Activated T-helper 1 cell treated with anti-CD3 and anti-CD28 coated beads, Interleukin-12 subunit alpha, Interleukin-12 subunit beta, Interleukin-2, Interleukin-4 antibody, amounts not matched to agents 30 ng/mL and 10 ng/mL and 1 ng/mL, durations not matched to agents 14 hours and 24 hours and 36 hours (primary cell): ENCODE measurements at regions of chr17 and their contacts with region 1.

Region 1: GRCh38 chr17:66301797-66302741 is at the start of gene PRKCA:
- DNase-seq: peak; percentile 77
- H3K4me3 Mint-ChIP-seq: peak within 1 kb of the TSS; percentile 100
- H3K27ac Mint-ChIP-seq: peak within 1 kb of the TSS; percentile 99
- H3K4me1 Mint-ChIP-seq: peaks cover 48% of the 10 kb centered on the region
- H3K27me3 Mint-ChIP-seq: peaks cover 9% of the 10 kb centered on the region
- total RNA-seq, gene PRKCA: 155 and 157 TPM in 2 replicates

Region 2: GRCh38 chr17:65055348-65056261 is 1246.5 kb before region 1 on chr17:
- intact Hi-C with region 1: loop called (anchors 5 kb)
- DNase-seq: peak; percentile 53
- H3K4me3 Mint-ChIP-seq: peak overlapping the region; percentile 94
- H3K27ac Mint-ChIP-seq: peak overlapping the region; percentile 93
- H3K4me1 Mint-ChIP-seq: peaks cover 32% of the 10 kb centered on the region
- H3K27me3 Mint-ChIP-seq: peaks cover 5% of the 10 kb centered on the region

Region 3: DNA sequence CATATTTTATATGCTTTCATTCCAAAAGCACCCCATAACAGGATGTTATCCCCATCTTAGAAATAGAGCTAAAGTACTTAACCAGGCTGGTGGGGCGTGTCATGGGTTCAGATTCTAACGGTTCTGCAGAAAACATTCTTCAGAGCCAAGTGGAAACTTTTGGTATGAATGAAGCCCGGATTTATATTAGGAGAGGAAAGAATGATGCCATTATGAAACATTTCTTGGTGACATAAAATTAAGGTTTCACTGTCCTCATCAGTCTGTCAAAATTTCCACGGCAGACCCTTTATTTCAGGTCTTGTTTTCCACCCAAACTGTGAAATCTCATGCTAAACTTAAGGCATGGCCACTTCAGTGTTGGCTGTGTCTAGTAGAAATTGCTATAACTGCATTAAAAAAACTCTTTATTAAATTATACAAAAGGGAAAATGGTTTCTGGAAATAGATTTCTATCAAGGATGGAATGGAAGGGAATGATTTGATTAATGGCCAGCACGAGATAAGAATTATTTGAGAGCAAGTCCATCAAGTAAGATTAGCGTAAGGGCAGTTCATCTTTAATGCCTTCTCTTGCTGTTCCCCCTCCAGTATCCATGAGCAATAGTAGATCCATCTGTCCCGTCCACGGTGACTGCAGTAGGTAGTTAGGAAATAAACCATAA is 12.1 kb after region 1 on chr17:
- intact Hi-C with region 1: loop called (anchors 1 kb)
- DNase-seq: no peak
- H3K4me3 Mint-ChIP-seq: no peak overlapping the region
- H3K27ac Mint-ChIP-seq: peak overlapping the region; percentile 80
- H3K4me1 Mint-ChIP-seq: peaks cover 77% of the 10 kb centered on the region
- H3K27me3 Mint-ChIP-seq: no peaks in the 10 kb centered on the region

Region 4: DNA sequence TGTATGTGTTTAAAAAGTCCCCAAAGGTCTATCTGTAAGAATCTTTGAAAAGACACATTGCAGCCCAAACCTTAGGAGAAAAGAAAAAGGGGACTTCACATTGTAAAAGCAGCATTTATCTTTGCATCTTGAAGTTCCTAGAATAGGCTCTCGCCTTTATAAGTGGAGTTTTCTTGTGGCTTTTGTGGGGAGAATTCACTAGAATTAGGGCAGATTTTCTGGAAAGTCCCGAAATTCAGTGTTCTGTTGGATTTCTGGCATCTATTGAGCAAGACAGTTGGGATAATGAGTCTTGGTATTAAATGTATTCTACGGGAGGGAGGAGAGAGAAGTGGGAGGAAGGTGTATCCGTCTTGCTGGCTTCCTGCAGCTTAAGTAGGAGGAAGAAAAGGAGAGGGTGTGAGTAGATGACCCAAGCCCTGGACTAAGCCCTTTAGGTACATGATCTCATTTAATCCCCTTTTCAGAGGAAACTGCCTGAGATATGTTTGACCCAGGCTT is 63.0 kb after region 1 on chr17:
- intact Hi-C with region 1: loop called (anchors 2 kb)
- DNase-seq: no peak
- H3K4me3 Mint-ChIP-seq: peak overlapping the region; percentile 53
- H3K27ac Mint-ChIP-seq: peak overlapping the region; percentile 91
- H3K4me1 Mint-ChIP-seq: peaks cover 83% of the 10 kb centered on the region
- H3K27me3 Mint-ChIP-seq: no peaks in the 10 kb centered on the region

Region 5: DNA sequence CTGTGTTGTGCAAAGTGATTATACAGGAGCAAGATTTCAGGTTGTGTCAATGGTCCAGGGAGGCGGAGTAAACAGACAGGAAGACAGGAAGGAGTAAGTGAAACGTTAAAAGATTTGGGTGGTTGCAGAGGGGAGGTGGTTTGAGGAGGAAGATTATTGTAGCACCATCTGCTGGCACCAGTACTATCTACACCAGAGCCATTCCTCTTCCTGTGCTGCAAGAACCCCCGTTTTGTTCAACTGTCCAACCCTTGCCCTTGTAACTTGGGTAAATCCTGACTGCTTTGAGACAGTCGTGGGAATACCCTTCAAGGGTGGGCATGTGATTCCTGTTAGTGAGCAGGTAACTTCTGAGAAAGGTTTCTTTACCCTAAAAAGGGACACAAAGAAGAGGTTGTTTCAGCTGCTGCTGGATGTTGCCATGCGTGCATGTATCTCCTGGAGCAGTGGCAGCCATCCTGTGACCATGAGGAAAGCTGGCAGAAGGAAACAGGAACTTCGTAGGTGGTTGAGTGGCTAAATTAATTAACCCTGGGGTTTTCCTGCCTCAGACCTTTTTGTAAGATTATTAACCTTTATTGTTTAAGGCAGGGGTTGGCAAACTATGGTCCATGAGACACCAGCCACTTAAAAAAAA is 124.4 kb after region 1 on chr17:
- intact Hi-C with region 1: loop called (anchors 1 kb)
- DNase-seq: peak; percentile 48
- H3K4me3 Mint-ChIP-seq: peak overlapping the region; percentile 23
- H3K27ac Mint-ChIP-seq: peak overlapping the region; percentile 66
- H3K4me1 Mint-ChIP-seq: peaks cover 65% of the 10 kb centered on the region
- H3K27me3 Mint-ChIP-seq: no peaks in the 10 kb centered on the region

Region 6: DNA sequence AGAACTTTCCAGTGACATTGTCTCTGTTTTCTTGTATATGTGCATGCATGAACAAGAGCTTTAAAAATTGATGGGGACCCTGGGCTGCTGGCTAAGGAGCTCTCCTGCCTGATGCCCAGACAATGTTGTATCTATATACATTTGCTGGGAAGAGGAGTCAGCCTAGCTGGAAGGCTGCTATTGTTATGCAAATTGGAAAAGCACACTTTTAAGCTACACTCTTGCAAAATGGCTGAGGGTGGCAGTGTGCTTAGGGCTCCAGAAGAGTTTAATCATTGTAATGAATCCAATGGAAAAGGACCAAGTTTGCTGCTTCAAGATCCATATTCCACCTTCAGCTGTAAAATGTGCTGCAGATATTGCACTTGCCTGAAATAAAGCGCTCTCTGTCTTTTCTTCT is 172.2 kb after region 1 on chr17:
- intact Hi-C with region 1: no loop called
- DNase-seq: no peak
- H3K4me3 Mint-ChIP-seq: no peak overlapping the region
- H3K27ac Mint-ChIP-seq: no peak overlapping the region
- H3K4me1 Mint-ChIP-seq: peaks cover 40% of the 10 kb centered on the region
- H3K27me3 Mint-ChIP-seq: no peaks in the 10 kb centered on the region

Region 7: GRCh38 chr17:66549731-66550207 is 247.7 kb after region 1 on chr17:
- intact Hi-C with region 1: loop called (anchors 1 kb)
- DNase-seq: no peak
- H3K4me3 Mint-ChIP-seq: no peak overlapping the region
- H3K27ac Mint-ChIP-seq: no peak overlapping the region
- H3K4me1 Mint-ChIP-seq: peaks cover 42% of the 10 kb centered on the region
- H3K27me3 Mint-ChIP-seq: no peaks in the 10 kb centered on the region

Region 8: DNA sequence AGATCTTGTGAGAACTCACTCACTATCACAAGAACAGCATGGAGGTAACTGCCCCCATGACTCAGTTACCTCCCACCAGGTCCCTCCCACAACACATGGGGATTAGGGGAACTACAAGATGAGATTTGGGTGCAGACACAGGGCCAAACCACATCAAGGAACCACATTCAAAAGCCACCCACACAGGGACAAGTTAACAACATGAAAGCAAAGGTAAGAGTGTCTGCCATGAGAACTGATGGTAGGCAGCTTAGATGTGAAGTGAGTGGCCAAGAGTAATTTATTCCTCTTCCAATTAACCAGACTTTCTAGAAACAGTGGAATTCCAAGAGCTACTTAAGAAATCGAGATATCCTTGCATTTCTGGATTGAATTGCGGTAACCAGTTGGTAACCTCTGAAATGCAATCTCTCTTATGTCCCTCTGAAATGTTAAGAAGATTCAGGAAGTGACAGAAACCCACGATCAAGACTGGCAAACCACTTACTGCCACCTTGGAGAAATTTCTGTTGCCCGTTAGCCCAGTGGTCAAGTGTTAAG is 365.5 kb after region 1 on chr17:
- intact Hi-C with region 1: loop called (anchors 1 kb)
- DNase-seq: peak; percentile 61
- H3K4me3 Mint-ChIP-seq: peak overlapping the region; percentile 67
- H3K27ac Mint-ChIP-seq: peak overlapping the region; percentile 88
- H3K4me1 Mint-ChIP-seq: peaks cover 76% of the 10 kb centered on the region
- H3K27me3 Mint-ChIP-seq: peaks cover 3% of the 10 kb centered on the region